ENCODE measurements at regions of chr6 and their contacts with region 1.

Region 1: DNA sequence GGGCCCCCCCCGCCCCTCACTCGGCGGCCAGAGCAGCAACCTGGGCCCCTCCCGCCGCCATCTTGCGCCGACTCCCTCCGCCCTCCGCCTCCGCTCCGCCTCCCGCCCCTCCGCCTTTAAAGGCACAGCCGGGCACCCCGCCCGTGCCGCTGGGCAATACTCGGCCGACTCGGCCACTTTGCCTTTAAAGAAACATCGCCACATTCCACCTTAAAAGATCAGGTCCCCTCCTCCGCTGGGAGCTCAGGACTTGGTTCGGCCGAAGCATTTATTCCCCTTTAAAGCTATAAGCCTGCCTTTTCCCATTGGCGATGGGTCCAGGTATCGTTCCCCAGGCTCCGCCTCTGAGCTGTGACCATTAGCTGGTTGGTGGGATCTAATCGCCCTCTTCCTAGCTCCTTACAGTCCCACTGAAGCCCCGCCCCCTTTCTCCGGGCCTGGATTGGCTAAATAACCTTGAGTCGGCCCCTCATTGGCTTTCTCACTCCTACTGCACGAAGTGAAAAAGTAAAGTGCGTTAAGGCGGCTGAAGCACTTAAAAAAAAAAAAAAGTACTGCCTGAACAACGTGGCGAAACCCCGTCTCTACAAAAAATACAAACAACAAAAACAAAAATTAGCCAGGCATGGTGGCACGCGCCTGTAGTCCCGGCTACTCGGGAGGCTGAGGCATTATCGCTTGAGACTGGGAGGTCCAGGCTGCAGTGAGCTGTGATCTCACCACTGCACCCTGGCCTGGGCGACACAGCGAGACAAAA is at the start of gene ZBTB22:
- H3K4me3 ChIP-seq: peak within 1 kb of the TSS; percentile 58
- H3K27ac ChIP-seq: peak within 1 kb of the TSS; percentile 35
- H3K4me1 ChIP-seq: peaks cover 25% of the 10 kb centered on the region
- CTCF ChIP-seq: no peak

Region 2: GRCh38 chr6:33000055-33000454 is 317.8 kb before region 1 on chr6:
- CTCF ChIA-PET with region 1: no interaction called
- POLR2A ChIA-PET with region 1: no interaction called
- H3K4me3 ChIP-seq: no peak overlapping the region
- H3K27ac ChIP-seq: no peak overlapping the region
- H3K4me1 ChIP-seq: no peaks in the 10 kb centered on the region
- CTCF ChIP-seq: peak; percentile 74

Region 3: GRCh38 chr6:33276864-33277662 is 40.8 kb before region 1 on chr6 and contains the start of gene B3GALT4:
- CTCF ChIA-PET with region 1: interaction called, 11 read pairs
- POLR2A ChIA-PET with region 1: interaction called, 26 read pairs
- H3K4me3 ChIP-seq: peak within 1 kb of the TSS; percentile 56
- H3K27ac ChIP-seq: peak within 1 kb of the TSS; percentile 79
- H3K4me1 ChIP-seq: peaks cover 31% of the 10 kb centered on the region
- CTCF ChIP-seq: peak; percentile 97

Region 4: DNA sequence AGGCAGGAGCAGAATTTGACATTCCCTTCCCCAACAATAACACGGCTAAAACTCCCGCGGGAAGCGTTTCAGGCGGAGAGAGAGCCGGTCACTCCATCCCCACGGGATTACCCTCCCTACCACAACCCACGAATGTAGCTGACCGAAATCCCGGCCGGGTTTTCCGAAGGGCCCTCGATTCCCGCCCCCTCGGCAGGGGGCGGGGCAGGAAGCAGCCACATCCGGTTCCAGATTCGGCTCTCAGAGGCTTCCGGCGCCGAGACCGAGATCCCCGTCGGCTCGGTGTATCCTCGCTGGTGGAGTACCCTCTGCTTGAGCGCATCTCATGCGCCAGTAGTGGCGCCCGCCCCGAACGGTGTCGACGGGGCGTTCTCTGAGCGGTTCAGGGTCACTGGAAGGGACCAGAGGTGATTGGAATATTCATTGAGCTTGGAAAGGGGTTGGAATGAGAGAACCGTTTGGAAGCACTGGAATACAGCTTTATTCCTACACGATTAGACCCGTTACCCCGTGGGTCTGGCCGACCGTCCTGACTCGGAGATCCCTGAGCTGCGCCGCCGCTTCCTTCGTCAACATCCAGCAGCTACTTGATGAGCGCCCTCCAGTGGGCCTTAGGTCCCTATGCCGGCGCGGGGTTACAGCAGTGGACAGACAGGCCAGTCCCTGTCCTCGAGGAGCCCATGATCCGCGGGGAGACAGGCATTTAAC is 18.5 kb before region 1 on chr6:
- CTCF ChIA-PET with region 1: interaction called, 53 read pairs
- POLR2A ChIA-PET with region 1: interaction called, 57 read pairs
- H3K4me3 ChIP-seq: peak overlapping the region; percentile 74
- H3K27ac ChIP-seq: peak overlapping the region; percentile 91
- H3K4me1 ChIP-seq: no peaks in the 10 kb centered on the region
- CTCF ChIP-seq: peak; percentile 90

Region 5: DNA sequence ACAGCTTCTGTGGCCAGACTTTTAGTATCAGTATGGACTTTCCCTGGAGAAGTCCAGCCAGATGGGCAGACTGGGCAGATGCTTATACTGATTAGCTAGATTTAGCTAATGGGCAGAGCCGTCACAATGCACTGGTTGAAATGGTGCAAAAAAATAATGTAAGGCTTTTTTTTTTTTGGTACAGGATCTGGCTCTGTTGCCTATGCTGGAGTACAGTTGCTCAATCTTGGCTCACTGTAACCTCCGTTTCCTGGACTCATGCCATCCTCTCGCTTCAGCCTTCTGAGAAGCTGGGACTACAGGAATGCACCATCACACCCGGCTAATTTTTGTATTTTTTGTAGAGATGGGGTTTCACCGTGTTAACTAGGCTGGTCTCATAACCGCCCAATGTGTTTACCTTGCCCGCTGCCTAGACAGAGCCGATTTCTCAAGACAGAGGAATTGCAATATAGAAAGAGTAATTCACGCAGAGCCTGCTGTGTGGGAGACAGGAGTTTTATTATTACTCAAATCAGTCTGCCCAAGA is 57.4 kb after region 1 on chr6:
- CTCF ChIA-PET with region 1: interaction called, 11 read pairs
- POLR2A ChIA-PET with region 1: no interaction called
- H3K4me3 ChIP-seq: no peak overlapping the region
- H3K27ac ChIP-seq: no peak overlapping the region
- H3K4me1 ChIP-seq: peaks cover 19% of the 10 kb centered on the region
- CTCF ChIP-seq: no peak

Region 6: GRCh38 chr6:33410050-33410710 is 92.3 kb after region 1 on chr6:
- CTCF ChIA-PET with region 1: interaction called, 5 read pairs
- POLR2A ChIA-PET with region 1: interaction called, 22 read pairs
- H3K4me3 ChIP-seq: peak overlapping the region; percentile 74
- H3K27ac ChIP-seq: peak overlapping the region; percentile 50
- H3K4me1 ChIP-seq: peaks cover 4% of the 10 kb centered on the region; the same call in 1 of the 2 replicates
- CTCF ChIP-seq: no peak